OCI-LY7 (cell line): ENCODE measurements at regions of chr12 and their contacts with region 1.

Region 1: GRCh38 chr12:132986001-132986912 is at the start of gene ZNF26:
- DNase-seq: peak; percentile 96
- H3K4me3 ChIP-seq: peak within 1 kb of the TSS; percentile 94
- H3K27ac ChIP-seq: no peak within 1 kb of the TSS
- H3K4me1 ChIP-seq: peaks cover 13% of the 10 kb centered on the region
- CTCF ChIP-seq: no peak
- total RNA-seq, gene ZNF26: 12.5 and 15.7 TPM in 2 replicates

Region 2: GRCh38 chr12:132956011-132956788 is 30.1 kb before region 1 on chr12 and contains the start of gene ZNF605:
- CTCF ChIA-PET with region 1: no interaction called
- POLR2A ChIA-PET with region 1: interaction called, 3 read pairs
- intact Hi-C with region 1: loop called (anchors 1 kb)
- DNase-seq: peak; percentile 89
- H3K4me3 ChIP-seq: peak within 1 kb of the TSS; percentile 95
- H3K27ac ChIP-seq: peak within 1 kb of the TSS; percentile 34
- H3K4me1 ChIP-seq: peaks cover 5% of the 10 kb centered on the region
- CTCF ChIP-seq: no peak
- total RNA-seq, gene ZNF605: 6.6 and 7.1 TPM in 2 replicates

Region 3: GRCh38 chr12:133037207-133038005 is 51.1 kb after region 1 on chr12 and contains the start of gene ZNF84:
- CTCF ChIA-PET with region 1: no interaction called
- POLR2A ChIA-PET with region 1: interaction called, 4 read pairs
- intact Hi-C with region 1: loop called (anchors 1 kb)
- DNase-seq: peak; percentile 98
- H3K4me3 ChIP-seq: peak within 1 kb of the TSS; percentile 86
- H3K27ac ChIP-seq: peak within 1 kb of the TSS; percentile 81
- H3K4me1 ChIP-seq: peaks cover 8% of the 10 kb centered on the region
- CTCF ChIP-seq: no peak
- total RNA-seq, gene ZNF84: 22.1 and 26.9 TPM in 2 replicates

Region 4: DNA sequence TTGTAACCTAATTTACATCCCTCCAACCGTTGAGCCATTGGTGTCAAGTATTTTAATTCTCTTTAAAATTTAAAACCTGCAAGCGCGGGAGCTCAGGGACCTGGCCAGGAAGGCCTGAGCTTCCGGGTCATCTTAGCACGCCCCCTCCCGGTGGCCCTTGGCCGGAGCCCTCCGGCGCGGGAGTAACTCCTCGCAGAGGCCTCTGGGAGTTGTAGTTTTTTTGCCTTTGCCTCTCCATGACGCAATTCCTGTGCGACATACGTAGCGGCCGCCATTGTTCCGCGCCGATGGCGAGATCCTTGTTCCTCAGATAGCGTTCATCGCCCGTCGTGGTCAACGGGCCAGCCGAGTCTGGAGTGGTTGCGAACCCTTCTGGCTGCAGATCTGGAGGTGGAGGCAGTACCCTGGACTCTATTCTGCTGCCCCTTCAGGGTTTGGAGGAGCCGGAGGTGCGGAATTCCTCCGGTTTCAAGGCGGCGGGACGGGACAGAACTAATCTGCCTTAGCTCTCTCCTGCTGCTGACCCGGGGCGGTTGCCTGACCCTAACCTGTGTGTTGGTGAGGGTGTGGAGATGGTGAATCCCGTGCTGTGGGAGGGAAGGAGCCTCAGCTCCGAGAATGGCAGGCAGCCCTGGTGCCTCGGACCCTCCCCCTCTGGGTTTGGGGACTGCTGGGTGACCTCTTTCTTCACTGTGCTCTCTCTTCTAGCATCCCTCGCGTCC is 195.1 kb after region 1 on chr12 and contains the start of gene ZNF268:
- CTCF ChIA-PET with region 1: no interaction called
- POLR2A ChIA-PET with region 1: interaction called, 3 read pairs
- intact Hi-C with region 1: loop called (anchors 1 kb)
- DNase-seq: peak; percentile 98
- H3K4me3 ChIP-seq: peak within 1 kb of the TSS; percentile 82
- H3K27ac ChIP-seq: peak within 1 kb of the TSS; percentile 40
- H3K4me1 ChIP-seq: peaks cover 7% of the 10 kb centered on the region
- CTCF ChIP-seq: peak; percentile 90
- total RNA-seq, gene ZNF268: 7.7 and 19.1 TPM in 2 replicates